Activated naive CD4-positive, alpha-beta T cell treated with anti-CD3 and anti-CD28 coated beads for 36 hours (primary cell): ENCODE measurements at regions of chr6 and their contacts with region 1.

Region 1: GRCh38 chr6:37051138-37052026 is 45.9 kb downstream of the FGD2 start:
- DNase-seq: peak; percentile 96
- H3K4me3 Mint-ChIP-seq: peak overlapping the region; percentile 86
- H3K27ac Mint-ChIP-seq: peak overlapping the region; percentile 99
- H3K4me1 Mint-ChIP-seq: peaks cover 56% of the 10 kb centered on the region
- H3K27me3 Mint-ChIP-seq: no peaks in the 10 kb centered on the region

Region 2: DNA sequence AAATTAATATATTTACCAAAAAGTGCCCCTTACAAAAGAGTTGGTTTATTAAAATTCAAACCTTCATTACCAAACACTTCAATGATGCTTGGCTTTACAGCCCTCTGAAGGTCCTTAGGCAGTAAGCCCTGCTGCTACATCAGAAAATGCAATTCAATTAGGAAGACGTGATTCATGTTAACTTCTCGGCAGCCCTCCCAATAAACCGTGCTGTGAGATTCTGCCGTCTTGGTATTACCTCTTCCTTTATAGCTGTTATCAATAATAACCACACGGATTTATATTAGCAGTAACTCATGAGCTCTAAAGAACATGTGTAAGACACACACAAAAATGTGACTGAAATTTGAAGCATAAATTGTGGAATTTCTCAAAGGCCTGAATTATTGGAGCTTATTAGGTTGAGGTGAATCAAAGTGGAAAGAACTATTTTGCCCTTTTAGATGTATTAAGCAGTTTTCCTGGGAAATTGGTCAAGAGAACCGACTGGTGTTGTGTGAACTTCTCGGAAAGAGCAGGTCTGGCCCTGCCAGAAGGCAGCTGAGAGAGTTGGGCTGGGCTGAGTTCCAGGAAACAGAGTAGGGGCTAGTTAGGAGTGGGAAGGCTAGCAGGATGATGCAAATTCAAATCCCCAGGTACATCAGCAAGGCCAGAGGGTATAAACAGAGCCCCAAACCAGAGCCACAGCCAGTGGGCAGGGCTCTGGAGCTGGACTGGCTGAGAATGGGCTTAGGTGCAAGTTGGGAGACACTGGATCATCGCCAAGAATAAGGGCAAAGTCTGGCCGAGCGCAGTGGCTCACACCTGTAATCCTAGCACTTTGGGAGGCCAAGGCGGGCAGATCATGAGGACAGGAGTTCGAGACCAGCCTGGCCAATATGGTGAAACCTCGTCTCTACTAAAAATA is 12.8 kb before region 1 on chr6:
- CTCF ChIA-PET with region 1: interaction called, 12 read pairs
- intact Hi-C with region 1: loop called (anchors 1 kb)
- DNase-seq: no peak
- H3K4me3 Mint-ChIP-seq: no peak overlapping the region
- H3K27ac Mint-ChIP-seq: no peak overlapping the region
- H3K4me1 Mint-ChIP-seq: peaks cover 36% of the 10 kb centered on the region
- H3K27me3 Mint-ChIP-seq: no peaks in the 10 kb centered on the region

Region 3: DNA sequence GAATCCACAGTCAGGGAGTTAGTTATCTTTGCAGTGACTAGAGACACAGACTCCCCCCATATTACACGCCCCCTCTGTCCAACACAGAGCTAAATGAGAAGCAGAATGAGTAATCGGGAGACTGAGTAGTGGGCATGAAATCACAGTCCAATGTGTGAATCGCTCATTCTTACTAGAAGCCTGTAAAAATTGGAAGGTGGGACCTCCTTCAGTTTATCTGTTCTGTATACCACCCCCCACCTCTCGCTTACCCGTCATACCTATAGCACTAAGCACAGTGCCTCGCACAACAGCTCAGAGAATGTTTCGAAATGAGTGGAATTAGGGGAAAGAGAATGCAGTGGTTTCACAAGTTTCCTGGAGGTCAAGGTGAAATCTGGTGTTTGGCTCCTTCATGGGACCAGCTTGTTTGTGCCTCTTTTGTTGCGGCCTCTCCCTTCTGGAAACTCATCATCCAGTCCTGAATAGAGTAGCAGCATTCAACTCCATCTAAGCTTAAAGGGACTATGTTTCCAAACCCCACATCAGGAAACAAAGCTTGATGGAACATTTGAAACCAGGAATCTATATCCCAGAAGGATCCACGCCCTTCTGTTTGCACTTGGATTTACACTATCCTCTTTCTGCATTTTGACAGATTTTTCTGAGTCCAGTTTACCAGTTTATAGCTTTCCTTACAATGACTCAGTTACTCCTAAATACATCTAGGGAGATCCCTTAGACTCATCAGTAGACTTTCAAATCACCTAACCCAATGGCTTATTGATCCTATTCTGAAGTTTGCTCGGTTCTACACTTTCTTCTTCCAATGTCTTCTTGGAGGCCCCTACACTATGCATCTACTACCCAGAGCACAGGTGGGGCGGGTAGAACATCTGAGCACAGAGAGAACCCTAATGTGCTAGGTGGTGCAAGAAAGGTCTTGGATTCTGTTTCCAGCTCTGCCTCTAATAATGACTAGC is 59.4 kb after region 1 on chr6:
- CTCF ChIA-PET with region 1: interaction called, 4 read pairs
- intact Hi-C with region 1: loop called (anchors 2 kb)
- DNase-seq: peak; percentile 71
- H3K4me3 Mint-ChIP-seq: no peak overlapping the region
- H3K27ac Mint-ChIP-seq: peak overlapping the region; percentile 80
- H3K4me1 Mint-ChIP-seq: peaks cover 17% of the 10 kb centered on the region
- H3K27me3 Mint-ChIP-seq: no peaks in the 10 kb centered on the region

Region 4: DNA sequence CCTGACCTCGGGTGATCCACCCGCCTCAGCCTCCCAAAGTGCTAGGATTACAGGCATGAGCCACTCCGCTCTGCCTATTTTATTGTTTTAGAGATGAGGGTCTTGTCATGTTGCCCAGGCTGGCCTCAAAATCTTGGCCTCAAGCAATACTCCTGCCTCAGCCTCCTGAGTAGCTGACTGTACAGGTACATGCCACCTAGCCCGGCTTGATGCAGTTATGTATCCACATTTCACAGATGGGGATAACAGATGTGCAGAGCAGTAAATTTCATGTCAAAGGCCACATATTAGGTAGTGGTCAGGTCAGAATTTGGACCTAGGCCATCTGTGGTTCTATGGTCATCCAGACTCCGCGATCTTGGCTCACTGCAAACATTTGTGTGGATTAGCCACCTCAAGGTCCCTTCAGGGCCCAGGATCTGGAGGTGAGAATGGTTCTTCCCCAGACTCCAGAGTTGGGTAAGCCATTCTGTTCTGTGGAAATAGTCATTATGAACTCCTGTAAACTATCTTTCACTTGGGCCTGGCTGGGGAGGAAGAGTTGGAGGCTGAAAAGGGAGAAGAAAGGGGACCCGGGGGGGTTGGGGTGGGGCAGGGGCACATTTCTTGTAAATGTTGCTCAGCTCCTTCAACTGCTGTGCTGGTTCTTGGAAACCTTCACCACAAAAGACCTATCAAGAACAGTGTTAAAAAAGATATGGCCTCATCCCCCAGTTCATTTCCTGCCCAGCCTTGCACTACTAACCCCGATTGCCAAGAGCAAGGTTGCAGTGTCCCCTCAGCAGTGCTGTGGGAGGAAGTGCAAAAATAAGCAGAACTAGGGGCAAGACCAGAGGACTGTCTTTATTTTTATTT is 131.6 kb after region 1 on chr6:
- CTCF ChIA-PET with region 1: interaction called, 9 read pairs
- intact Hi-C with region 1: loop called (anchors 1 kb)
- DNase-seq: peak; percentile 83
- H3K4me3 Mint-ChIP-seq: peak overlapping the region; percentile 34
- H3K27ac Mint-ChIP-seq: peak overlapping the region; percentile 95
- H3K4me1 Mint-ChIP-seq: peaks cover 59% of the 10 kb centered on the region
- H3K27me3 Mint-ChIP-seq: no peaks in the 10 kb centered on the region

Region 5: DNA sequence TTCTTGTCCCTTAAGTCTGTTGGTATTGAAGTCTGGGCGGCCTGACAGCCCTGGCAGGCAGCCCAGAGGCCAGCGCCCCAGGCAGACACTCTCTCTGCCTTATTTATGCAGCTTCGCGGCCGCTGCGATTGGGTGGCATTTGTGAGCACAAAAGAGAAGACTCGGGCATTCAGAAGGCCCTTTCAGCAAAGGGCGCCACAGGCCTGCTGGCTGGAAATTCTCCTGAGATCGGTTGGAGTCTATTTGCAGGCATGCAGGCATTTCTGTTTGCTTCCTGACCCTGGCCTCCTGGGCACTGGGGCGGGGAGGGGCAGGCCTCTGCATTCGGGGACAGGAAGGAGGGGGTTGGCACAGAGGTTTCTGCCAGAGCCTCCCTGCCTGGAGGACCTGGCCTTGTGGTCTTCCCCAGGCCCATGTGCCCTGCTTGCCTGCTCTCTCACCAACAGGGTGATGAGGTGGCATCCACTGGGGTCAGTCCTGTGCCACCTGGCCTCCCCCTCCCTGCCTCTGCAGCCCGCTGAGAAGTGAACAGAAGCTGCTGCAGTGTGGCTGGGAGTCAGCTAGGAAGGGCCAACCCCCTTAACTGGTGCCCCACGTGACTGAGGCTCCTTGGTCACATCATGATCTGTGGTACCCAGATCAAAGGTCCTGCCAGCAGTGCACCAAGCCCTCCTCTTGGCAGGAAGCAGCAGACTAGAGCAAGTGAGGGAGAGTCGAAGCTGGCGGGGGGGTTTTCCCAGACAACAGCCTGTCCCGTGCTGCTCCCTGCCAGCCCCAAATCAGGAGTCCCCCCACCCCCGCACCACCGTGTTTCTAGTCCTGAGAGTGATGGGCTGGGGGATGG is 464.9 kb after region 1 on chr6:
- CTCF ChIA-PET with region 1: no interaction called
- intact Hi-C with region 1: loop called (anchors 2 kb)
- DNase-seq: peak; percentile 98
- H3K4me3 Mint-ChIP-seq: peak overlapping the region; percentile 72
- H3K27ac Mint-ChIP-seq: peak overlapping the region; percentile 97
- H3K4me1 Mint-ChIP-seq: peaks cover 82% of the 10 kb centered on the region
- H3K27me3 Mint-ChIP-seq: no peaks in the 10 kb centered on the region